PC-3 (cell line): ENCODE measurements at regions of chr5 and their contacts with region 1.

Region 1: DNA sequence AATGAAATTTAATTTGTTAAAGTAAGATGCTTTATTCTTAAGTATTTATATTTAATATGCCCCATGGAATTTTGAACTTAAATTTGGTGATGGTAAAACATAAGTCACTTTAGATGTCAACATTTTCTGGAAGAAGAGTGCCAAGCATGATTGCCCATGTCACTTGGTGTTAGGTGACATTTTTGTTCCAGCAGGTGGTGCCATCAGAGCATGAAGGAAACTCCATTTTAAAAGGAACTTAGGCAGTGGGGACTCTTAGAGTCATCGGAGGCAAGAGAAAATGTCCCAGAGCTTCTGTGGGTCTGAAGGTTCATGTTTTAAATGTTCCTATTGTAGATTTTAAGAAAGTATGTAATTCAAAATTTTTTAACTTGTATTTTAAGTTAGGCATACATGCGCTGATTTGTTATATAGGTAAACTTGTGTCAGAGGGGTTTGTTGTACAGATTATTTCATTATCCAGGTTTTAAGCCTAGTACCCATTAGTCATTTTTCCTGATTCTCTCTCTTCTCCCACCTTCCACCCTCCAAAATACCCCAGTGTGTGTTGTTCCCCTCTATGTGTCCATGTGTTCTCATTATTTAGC is 789.3 kb downstream of the SEMA5A start:
- DNase-seq: peak; percentile 87
- ATAC-seq: peak; percentile 85
- H3K4me3 ChIP-seq: no peak overlapping the region
- H3K27ac ChIP-seq: no peak overlapping the region
- H3K4me1 ChIP-seq: no peaks in the 10 kb centered on the region
- H3K27me3 ChIP-seq: no peaks in the 10 kb centered on the region
- CTCF ChIP-seq: peak; percentile 96

Region 2: GRCh38 chr5:7927466-7928375 is 828.9 kb before region 1 on chr5:
- CTCF ChIA-PET with region 1: no interaction called
- POLR2A ChIA-PET with region 1: no interaction called
- intact Hi-C with region 1: loop called (anchors 10 kb)
- DNase-seq: peak; percentile 86
- ATAC-seq: peak; percentile 97
- H3K4me3 ChIP-seq: no peak overlapping the region
- H3K27ac ChIP-seq: no peak overlapping the region
- H3K4me1 ChIP-seq: no peaks in the 10 kb centered on the region
- H3K27me3 ChIP-seq: peaks cover 22% of the 10 kb centered on the region; the same call in 1 of the 2 replicates
- CTCF ChIP-seq: peak; percentile 98

Region 3: GRCh38 chr5:8842971-8843551 is 86.5 kb after region 1 on chr5:
- CTCF ChIA-PET with region 1: no interaction called
- POLR2A ChIA-PET with region 1: no interaction called
- intact Hi-C with region 1: loop called (anchors 1 kb)
- DNase-seq: peak; percentile 61
- ATAC-seq: peak; percentile 64
- H3K4me3 ChIP-seq: no peak overlapping the region
- H3K27ac ChIP-seq: no peak overlapping the region
- H3K4me1 ChIP-seq: peaks cover 17% of the 10 kb centered on the region
- H3K27me3 ChIP-seq: no peaks in the 10 kb centered on the region
- CTCF ChIP-seq: peak; percentile 69

Region 4: GRCh38 chr5:9099689-9100088 is 343.1 kb after region 1 on chr5:
- CTCF ChIA-PET with region 1: no interaction called
- POLR2A ChIA-PET with region 1: no interaction called
- intact Hi-C with region 1: no loop called
- DNase-seq: peak; percentile 35
- ATAC-seq: no peak
- H3K4me3 ChIP-seq: no peak overlapping the region
- H3K27ac ChIP-seq: no peak overlapping the region
- H3K4me1 ChIP-seq: no peaks in the 10 kb centered on the region
- H3K27me3 ChIP-seq: no peaks in the 10 kb centered on the region
- CTCF ChIP-seq: peak; percentile 51